ENCODE measurements at regions of chr13 and their contacts with region 1.

Region 1: GRCh38 chr13:24053519-24054251 is 106.8 kb upstream of the SPATA13 start:
- DNase-seq: peak; percentile 78
- ATAC-seq: peak; percentile 95
- H3K4me3 Mint-ChIP-seq: no peak overlapping the region
- H3K27ac Mint-ChIP-seq: no peak overlapping the region
- H3K4me1 Mint-ChIP-seq: peaks cover 7% of the 10 kb centered on the region
- H3K27me3 Mint-ChIP-seq: peaks cover 4% of the 10 kb centered on the region

Region 2: DNA sequence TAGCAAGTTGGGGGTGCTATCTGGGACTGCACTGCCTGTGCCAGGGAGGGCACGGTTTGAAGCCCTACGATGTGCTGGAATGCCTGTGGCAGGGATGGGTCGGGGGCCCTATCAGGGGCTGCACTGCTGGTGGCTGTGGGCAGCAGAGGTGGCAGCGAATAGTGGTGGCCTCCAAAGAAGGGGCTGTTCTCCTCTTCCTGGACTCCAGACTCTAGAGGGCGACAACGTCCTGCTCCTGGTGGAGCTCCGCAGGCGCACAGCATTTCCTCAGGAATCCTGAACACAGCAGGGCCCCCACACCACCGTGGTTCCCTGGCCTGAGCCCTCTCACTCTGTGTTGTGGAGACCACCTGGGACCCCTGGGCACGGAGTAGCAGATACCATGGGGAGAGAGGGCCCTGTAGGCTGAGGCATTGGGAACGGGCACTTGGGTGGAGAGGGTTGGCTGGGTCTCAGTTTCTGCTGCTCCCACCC is 337.9 kb before region 1 on chr13:
- CTCF ChIA-PET with region 1: no interaction called
- POLR2A ChIA-PET with region 1: no interaction called
- DNase-seq: no peak
- ATAC-seq: no peak
- H3K4me3 Mint-ChIP-seq: no peak overlapping the region
- H3K27ac Mint-ChIP-seq: no peak overlapping the region
- H3K4me1 Mint-ChIP-seq: peaks cover 2% of the 10 kb centered on the region
- H3K27me3 Mint-ChIP-seq: peaks cover 23% of the 10 kb centered on the region

Region 3: GRCh38 chr13:23915308-23915707 is 138.4 kb before region 1 on chr13:
- CTCF ChIA-PET with region 1: no interaction called
- POLR2A ChIA-PET with region 1: no interaction called
- DNase-seq: no peak
- ATAC-seq: no peak
- H3K4me3 Mint-ChIP-seq: no peak overlapping the region
- H3K27ac Mint-ChIP-seq: no peak overlapping the region
- H3K4me1 Mint-ChIP-seq: peaks cover 4% of the 10 kb centered on the region
- H3K27me3 Mint-ChIP-seq: peaks cover 47% of the 10 kb centered on the region

Region 4: GRCh38 chr13:24020375-24020830 is 33.3 kb before region 1 on chr13:
- CTCF ChIA-PET with region 1: interaction called, 22 read pairs
- POLR2A ChIA-PET with region 1: no interaction called
- DNase-seq: peak; percentile 62
- ATAC-seq: no peak
- H3K4me3 Mint-ChIP-seq: no peak overlapping the region
- H3K27ac Mint-ChIP-seq: no peak overlapping the region
- H3K4me1 Mint-ChIP-seq: peaks cover 10% of the 10 kb centered on the region
- H3K27me3 Mint-ChIP-seq: no peaks in the 10 kb centered on the region

Region 5: DNA sequence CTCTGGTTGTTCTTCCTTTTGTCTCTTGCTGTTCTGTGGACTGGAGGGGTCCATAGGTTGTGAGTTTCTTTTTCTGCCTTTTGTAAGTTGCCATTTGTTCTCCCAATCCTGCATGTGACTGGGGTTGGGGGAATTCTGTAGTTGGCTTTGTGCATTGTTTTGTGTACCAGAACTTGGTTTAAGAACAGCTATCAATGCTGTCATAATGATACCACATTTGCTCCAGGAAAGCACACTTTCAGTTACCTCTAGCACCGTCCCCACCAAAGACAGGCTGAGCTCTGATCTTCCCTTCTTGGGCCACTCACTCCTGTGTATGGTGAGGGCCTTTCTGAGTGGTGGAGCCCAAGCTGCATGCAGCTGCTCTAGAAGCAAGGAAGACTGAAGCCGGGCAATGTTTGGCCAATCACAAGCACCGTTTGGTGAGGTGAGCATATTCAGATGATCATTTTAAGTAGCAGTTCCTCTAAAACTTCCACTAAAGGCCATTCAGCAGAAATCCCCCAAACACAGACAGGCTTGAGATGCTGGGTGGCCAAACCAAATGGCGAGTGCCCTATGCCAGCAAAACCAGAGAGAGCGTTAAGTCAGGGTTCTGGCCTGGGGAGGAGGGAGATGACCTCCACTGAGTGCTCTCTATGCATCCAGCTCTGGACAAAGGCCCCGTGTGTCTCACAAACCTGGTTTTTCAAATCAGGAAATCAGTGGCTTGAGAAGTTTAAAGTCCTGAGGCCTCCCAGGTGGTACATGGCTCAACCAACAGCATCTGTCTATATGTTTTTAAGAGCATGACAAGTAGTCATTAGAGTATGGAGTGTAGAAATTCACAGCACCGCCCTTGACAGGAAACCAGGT is 13.8 kb before region 1 on chr13:
- CTCF ChIA-PET with region 1: interaction called, 15 read pairs
- POLR2A ChIA-PET with region 1: no interaction called
- DNase-seq: no peak
- ATAC-seq: no peak
- H3K4me3 Mint-ChIP-seq: no peak overlapping the region
- H3K27ac Mint-ChIP-seq: no peak overlapping the region
- H3K4me1 Mint-ChIP-seq: peaks cover 9% of the 10 kb centered on the region
- H3K27me3 Mint-ChIP-seq: no peaks in the 10 kb centered on the region

Region 6: GRCh38 chr13:24160454-24161009 is 106.8 kb after region 1 on chr13 and contains the start of gene SPATA13:
- CTCF ChIA-PET with region 1: interaction called, 11 read pairs
- POLR2A ChIA-PET with region 1: interaction called, 3 read pairs
- DNase-seq: peak; percentile 94
- ATAC-seq: peak; percentile 92
- H3K4me3 Mint-ChIP-seq: peak within 1 kb of the TSS; percentile 88
- H3K27ac Mint-ChIP-seq: peak within 1 kb of the TSS; percentile 82
- H3K4me1 Mint-ChIP-seq: peaks cover 40% of the 10 kb centered on the region
- H3K27me3 Mint-ChIP-seq: peaks cover 3% of the 10 kb centered on the region
- total RNA-seq, gene SPATA13: 57.4 to 63.2 TPM

Region 7: DNA sequence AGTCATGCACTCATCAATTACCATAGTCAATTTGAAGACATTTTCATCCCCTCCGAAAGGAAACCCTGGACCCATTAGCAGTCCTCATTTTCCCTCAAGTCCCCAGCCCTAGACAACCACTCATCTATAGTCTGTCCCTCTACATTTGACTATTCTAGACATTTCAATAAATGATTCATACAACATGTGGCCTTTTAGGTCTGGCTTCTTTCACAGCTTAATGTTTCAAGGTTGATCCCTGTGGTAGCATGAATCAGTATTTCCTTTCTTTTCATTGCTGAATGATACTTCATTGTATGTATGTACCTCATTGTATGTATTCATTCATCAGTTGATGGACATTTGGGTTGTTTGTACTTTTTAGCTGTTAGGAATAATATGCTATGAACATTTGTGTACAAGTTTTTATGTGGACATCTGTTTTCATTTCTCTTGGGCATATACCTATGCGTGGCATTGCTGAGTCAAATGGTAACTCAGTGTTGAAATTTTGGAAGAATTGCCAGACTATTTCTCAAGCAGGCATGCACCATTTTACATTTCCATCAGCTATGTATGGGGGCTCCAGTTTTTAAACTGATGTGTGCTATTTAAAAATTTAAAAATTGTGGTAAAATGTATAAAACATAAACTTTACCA is 125.3 kb after region 1 on chr13:
- CTCF ChIA-PET with region 1: interaction called, 10 read pairs
- POLR2A ChIA-PET with region 1: no interaction called
- DNase-seq: no peak
- ATAC-seq: no peak
- H3K4me3 Mint-ChIP-seq: no peak overlapping the region
- H3K27ac Mint-ChIP-seq: no peak overlapping the region
- H3K4me1 Mint-ChIP-seq: peaks cover 39% of the 10 kb centered on the region
- H3K27me3 Mint-ChIP-seq: no peaks in the 10 kb centered on the region

Region 8: DNA sequence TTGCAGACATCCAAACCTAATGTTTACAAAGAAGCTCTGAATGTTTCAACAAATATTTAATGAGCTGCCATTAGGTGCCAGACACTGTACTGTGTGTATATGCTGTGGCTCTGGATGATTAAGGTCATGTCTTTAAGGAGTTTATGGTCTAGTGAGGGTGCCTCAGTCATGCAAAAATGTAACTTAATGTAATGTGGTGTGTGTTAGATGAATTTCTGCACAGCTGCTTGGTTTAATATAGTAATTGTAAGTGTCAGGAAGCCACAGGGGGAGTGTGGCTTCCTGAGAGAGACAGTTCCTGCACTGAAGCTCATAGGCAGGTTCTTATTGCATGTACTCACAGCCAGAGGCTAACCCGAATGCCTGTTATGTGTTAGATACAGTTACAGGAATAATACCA is 150.1 kb after region 1 on chr13:
- CTCF ChIA-PET with region 1: interaction called, 21 read pairs
- POLR2A ChIA-PET with region 1: no interaction called
- DNase-seq: peak; percentile 54
- ATAC-seq: peak; percentile 99
- H3K4me3 Mint-ChIP-seq: peak overlapping the region; percentile 56
- H3K27ac Mint-ChIP-seq: peak overlapping the region; percentile 80
- H3K4me1 Mint-ChIP-seq: peaks cover 42% of the 10 kb centered on the region
- H3K27me3 Mint-ChIP-seq: no peaks in the 10 kb centered on the region

Region 9: GRCh38 chr13:24220086-24220703 is 166.5 kb after region 1 on chr13:
- CTCF ChIA-PET with region 1: interaction called, 82 read pairs
- POLR2A ChIA-PET with region 1: no interaction called
- DNase-seq: peak; percentile 79
- ATAC-seq: peak; percentile 75
- H3K4me3 Mint-ChIP-seq: no peak overlapping the region
- H3K27ac Mint-ChIP-seq: no peak overlapping the region
- H3K4me1 Mint-ChIP-seq: peaks cover 50% of the 10 kb centered on the region
- H3K27me3 Mint-ChIP-seq: no peaks in the 10 kb centered on the region